ENCODE measurements at regions of chr3 and their contacts with region 1.

Region 1: DNA sequence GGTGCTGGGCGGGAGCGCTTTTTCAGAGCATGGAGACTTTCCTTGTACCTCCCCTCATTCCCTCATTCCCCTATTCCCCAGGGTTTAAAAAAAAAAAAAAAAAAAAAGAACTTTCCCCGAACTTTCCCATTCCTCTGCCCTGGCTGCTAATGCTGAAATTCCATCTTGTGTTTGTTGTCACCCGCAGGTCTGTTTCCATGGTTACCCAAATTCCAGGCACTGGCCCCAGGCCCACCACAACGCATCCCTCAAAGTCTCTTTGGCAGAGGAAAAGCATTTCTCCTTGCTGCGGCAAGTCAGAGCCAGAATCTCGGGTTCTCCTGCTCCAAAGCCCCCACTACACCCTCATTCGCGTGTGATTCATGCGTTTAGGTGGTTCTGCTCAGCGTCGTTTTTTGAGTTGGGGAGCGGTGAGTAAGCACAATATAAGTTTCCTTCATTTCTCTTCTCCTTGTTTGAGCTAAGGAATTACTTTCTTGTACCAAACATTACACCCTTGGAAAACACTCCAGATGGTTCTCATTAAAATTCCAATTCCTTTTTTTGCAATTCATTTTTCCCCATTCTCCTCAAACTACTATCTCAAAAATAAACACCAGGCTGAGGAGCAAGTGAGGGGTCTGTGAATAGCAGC is 21.6 kb downstream of the ANAPC13 start:
- DNase-seq: peak; percentile 92 to 93
- H3K4me3 ChIP-seq: no peak overlapping the region
- H3K27ac ChIP-seq: peak overlapping the region; percentile 83 to 85
- H3K4me1 ChIP-seq: peaks cover 19 to 22% of the 10 kb centered on the region in 2 donors
- H3K27me3 ChIP-seq: no peaks in the 10 kb centered on the region
- CTCF ChIP-seq: no peak
- POLR2A ChIP-seq: no peak

Region 2: DNA sequence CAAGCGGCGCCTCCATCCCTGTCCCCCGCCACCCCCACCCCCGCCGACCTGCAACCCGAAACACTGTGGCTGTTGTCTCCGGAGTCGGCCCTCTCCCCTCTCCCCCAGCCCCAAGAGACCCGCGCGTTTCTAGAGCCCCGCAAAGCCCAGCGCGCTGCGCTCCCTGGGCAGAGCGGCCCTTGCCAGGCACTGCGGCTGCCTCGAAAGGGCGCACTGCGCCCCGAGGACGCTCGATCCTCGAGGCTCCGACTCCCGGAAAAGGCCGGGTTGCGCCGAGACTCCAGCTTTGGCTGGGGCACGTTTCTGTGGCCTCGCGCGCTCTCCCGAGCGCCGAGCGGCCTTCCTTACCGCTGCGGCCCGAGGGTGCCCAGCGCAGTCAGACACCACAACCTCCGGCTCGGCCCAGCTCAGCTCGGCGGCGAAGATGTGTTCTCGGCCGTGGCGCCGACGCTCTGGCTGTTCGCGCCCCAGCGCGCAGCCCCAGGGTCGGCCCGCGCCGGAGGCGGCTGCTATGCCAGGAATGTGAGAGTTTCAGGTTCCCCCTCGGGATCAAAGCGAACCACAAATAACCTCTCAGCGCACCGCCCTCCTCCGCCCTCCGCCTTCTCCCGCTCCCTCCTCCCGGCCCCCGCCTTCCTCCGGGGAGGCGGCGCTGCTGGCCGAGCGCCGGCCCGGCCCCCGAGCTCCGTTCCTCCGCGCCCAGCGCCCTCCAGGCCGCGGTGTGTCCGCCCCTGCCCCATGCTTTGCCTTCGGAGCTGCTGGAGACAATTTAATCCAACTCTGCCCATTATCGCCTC is 90.0 kb before region 1 on chr3 and contains the start of gene AMOTL2:
- intact Hi-C with region 1: loop called (anchors 5 kb)
- DNase-seq: peak; percentile 91 to 93
- H3K4me3 ChIP-seq: peak within 1 kb of the TSS; percentile 52 to 89
- H3K27ac ChIP-seq: peak within 1 kb of the TSS; percentile 97 to 99
- H3K4me1 ChIP-seq: peaks cover 5 to 29% of the 10 kb centered on the region in 2 donors
- H3K27me3 ChIP-seq: no peaks in the 10 kb centered on the region
- CTCF ChIP-seq: peak in 1 of 4 experiments; percentile 6
- POLR2A ChIP-seq: peak; percentile 57 to 89
- total RNA-seq, gene AMOTL2: 49.4 to 87.5 (median 61.4) TPM

Measured in uterus (tissue), 4 donors.